ENCODE measurements at regions of chr17 and their contacts with region 1.

Region 1: DNA sequence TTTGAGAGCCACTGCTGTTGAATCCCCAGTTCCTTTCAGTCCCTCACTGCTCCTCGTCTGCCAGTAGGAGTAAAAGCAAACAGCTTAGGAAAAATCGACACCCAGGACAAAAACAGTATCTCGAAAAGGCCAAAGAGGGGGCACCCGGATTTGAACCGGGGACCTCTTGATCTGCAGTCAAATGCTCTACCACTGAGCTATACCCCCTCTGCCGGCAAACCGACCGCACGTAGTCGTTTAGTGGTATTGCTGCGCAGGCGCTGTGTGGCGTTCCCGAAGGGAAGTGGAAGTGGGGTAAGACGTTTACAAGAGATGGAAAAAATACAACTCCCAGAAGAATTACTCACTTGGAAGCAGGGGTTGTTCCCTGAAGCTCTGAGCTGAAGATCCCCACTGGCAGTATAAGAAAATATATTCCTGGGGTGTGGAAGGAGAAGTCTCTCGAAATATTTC is 2.2 kb upstream of the PLXDC1 start:
- DNase-seq: peak; percentile 98
- H3K4me3 Mint-ChIP-seq: peak overlapping the region; percentile 95
- H3K27ac Mint-ChIP-seq: peak overlapping the region; percentile 94
- H3K4me1 Mint-ChIP-seq: peaks cover 27% of the 10 kb centered on the region
- H3K27me3 Mint-ChIP-seq: peaks cover 41% of the 10 kb centered on the region

Region 2: GRCh38 chr17:38868817-38869525 is 284.7 kb before region 1 on chr17:
- intact Hi-C with region 1: loop called (anchors 1 kb)
- DNase-seq: peak; percentile 95
- H3K4me3 Mint-ChIP-seq: peak overlapping the region; percentile 97
- H3K27ac Mint-ChIP-seq: peak overlapping the region; percentile 96
- H3K4me1 Mint-ChIP-seq: peaks cover 42% of the 10 kb centered on the region
- H3K27me3 Mint-ChIP-seq: peaks cover 2% of the 10 kb centered on the region

Region 3: DNA sequence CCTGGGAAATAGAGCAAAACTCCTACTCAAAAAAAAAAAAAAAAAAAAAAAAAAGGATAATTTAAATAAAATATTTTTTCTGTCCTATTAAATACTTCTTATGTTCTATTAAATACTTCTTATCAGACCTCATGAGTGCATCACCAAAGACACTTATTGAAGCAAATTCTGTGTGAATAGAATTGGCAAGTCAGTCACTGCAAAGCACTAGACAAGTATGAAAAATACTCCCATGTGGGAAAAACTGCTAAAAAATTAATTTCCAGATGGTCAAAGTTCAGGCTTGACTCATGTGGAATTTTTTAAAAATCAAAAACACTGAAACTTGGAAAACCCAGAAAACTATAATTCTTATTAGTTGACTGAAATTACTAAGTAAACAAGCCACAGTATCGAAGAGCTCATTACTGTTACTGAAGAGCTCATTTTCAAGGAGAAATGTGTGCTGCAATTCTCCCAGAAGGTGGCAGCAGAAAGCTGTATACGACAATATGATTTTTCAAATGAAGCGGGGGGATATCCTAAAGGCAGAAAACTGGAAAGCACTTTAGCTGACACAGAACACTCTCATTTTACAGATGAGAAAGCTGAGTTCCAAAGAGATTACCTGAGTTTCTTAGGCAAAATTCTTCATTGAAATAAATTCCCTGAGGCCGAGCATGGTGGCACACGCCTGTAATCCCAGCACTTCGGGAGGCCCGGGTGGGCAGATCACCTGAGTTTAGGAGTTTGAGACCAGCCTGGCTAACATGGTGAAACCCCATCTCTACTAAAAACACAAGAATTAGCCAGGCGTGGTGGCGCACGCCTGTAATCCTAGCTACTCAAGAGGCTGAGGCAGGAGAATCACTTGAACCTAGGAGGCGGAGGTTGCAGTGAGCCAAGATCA is 170.5 kb before region 1 on chr17:
- intact Hi-C with region 1: loop called (anchors 1 kb)
- DNase-seq: peak; percentile 84
- H3K4me3 Mint-ChIP-seq: no peak overlapping the region
- H3K27ac Mint-ChIP-seq: no peak overlapping the region
- H3K4me1 Mint-ChIP-seq: peaks cover 5% of the 10 kb centered on the region
- H3K27me3 Mint-ChIP-seq: peaks cover 15% of the 10 kb centered on the region

Region 4: GRCh38 chr17:39057701-39058206 is 95.9 kb before region 1 on chr17:
- intact Hi-C with region 1: loop called (anchors 2 kb)
- DNase-seq: no peak
- H3K4me3 Mint-ChIP-seq: peak overlapping the region; percentile 80
- H3K27ac Mint-ChIP-seq: peak overlapping the region; percentile 53
- H3K4me1 Mint-ChIP-seq: peaks cover 18% of the 10 kb centered on the region
- H3K27me3 Mint-ChIP-seq: peaks cover 11% of the 10 kb centered on the region

Region 5: GRCh38 chr17:39164675-39165143 is 11.1 kb after region 1 on chr17:
- intact Hi-C with region 1: loop called (anchors 1 kb)
- DNase-seq: peak; percentile 92
- H3K4me3 Mint-ChIP-seq: peak overlapping the region; percentile 85
- H3K27ac Mint-ChIP-seq: peak overlapping the region; percentile 1
- H3K4me1 Mint-ChIP-seq: peaks cover 23% of the 10 kb centered on the region
- H3K27me3 Mint-ChIP-seq: peaks cover 26% of the 10 kb centered on the region

Region 6: DNA sequence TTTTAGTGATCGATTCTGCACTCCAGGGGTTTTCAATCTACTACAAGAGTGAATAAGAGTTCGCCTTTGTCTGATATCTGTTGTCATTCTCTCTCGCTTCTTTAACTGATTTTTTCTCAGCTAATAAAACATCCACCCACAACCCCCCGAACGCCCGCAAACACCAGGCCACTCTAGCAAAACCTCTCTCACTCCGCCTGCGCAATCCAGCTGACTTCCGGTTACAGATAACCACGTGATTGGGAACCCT is 46.1 kb after region 1 on chr17:
- intact Hi-C with region 1: loop called (anchors 5 kb)
- DNase-seq: peak; percentile 96
- H3K4me3 Mint-ChIP-seq: peak overlapping the region; percentile 98
- H3K27ac Mint-ChIP-seq: peak overlapping the region; percentile 98
- H3K4me1 Mint-ChIP-seq: peaks cover 52% of the 10 kb centered on the region
- H3K27me3 Mint-ChIP-seq: no peaks in the 10 kb centered on the region

Region 7: DNA sequence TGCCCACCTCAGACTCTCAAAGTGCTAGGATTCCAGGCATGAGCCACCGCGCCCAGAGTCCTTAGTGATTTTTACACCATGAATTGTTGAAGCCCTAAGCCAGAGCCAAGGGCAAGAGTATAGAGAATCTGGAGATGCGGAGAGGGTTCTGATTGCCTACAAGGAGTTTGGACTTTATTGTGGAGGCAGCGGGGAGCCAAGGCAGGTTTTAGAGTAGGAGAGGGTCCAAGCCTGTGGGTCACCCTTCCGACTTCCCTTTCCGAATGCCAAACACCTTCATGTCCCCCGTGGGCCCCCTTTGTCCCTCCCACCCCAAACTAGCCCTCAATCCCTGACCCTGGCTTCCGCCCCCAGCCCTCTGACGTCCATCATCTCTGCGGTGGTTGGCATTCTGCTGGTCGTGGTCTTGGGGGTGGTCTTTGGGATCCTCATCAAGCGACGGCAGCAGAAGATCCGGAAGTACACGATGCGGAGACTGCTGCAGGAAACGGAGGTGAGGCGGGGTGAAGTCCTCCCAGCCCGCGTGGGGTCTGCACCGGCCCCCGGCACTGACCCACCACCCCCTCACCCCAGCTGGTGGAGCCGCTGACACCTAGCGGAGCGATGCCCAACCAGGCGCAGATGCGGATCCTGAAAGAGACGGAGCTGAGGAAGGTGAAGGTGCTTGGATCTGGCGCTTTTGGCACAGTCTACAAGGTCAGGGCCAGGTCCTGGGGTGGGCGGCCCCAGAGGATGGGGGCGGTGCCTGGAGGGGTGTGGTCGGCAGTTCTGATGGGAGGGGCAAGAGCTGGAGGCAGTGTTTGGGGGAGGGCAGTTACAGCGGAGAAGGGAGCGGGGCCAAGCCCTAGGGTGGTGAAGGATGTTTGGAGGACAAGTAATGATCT is 569.6 kb after region 1 on chr17:
- intact Hi-C with region 1: no loop called
- DNase-seq: peak; percentile 69
- H3K4me3 Mint-ChIP-seq: no peak overlapping the region
- H3K27ac Mint-ChIP-seq: no peak overlapping the region
- H3K4me1 Mint-ChIP-seq: peaks cover 3% of the 10 kb centered on the region
- H3K27me3 Mint-ChIP-seq: no peaks in the 10 kb centered on the region